ENCODE measurements at regions of chr6 and their contacts with region 1.

Region 1: GRCh38 chr6:46407776-46408530 is 83.3 kb downstream of the RCAN2 start:
- DNase-seq: no peak
- H3K4me3 ChIP-seq: no peak overlapping the region
- H3K27ac ChIP-seq: peak overlapping the region; percentile 19 to 45
- H3K4me1 ChIP-seq: peaks cover 0 to 74% (median 33%) of the 10 kb centered on the region in 4 donors
- H3K27me3 ChIP-seq: no peaks in the 10 kb centered on the region
- CTCF ChIP-seq: no peak

Region 2: GRCh38 chr6:46234156-46234556 is 173.8 kb before region 1 on chr6:
- intact Hi-C with region 1: loop called (anchors 10 kb)
- DNase-seq: peak; percentile 45 to 68
- H3K4me3 ChIP-seq: no peak overlapping the region
- H3K27ac ChIP-seq: peak overlapping the region; percentile 12 to 20
- H3K4me1 ChIP-seq: peaks cover 0 to 49% (median 3%) of the 10 kb centered on the region in 4 donors
- H3K27me3 ChIP-seq: no peaks in the 10 kb centered on the region
- CTCF ChIP-seq: no peak

Region 3: DNA sequence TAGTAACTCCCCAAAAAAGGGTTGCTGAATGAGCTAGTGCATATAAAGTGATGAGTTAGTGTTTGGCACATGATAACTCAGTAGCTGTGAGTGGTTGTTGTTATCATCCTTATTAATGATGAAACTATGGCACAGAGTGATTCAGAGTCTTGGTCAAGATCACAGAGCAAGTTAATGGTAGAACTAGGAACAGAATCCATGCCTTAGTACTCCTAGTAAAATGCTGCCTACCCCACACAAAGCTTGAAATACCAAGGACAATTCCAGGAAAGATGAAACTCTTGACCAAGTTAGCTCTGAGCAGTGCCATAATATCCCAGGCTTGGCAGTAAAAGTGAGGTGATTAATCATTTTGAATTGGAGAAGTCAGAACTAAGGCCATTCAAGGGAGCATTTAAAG is 128.1 kb before region 1 on chr6:
- intact Hi-C with region 1: no loop called
- DNase-seq: no peak
- H3K4me3 ChIP-seq: no peak overlapping the region
- H3K27ac ChIP-seq: no peak overlapping the region
- H3K4me1 ChIP-seq: peaks cover 0 to 54% (median 2%) of the 10 kb centered on the region in 4 donors
- H3K27me3 ChIP-seq: no peaks in the 10 kb centered on the region
- CTCF ChIP-seq: no peak

Region 4: DNA sequence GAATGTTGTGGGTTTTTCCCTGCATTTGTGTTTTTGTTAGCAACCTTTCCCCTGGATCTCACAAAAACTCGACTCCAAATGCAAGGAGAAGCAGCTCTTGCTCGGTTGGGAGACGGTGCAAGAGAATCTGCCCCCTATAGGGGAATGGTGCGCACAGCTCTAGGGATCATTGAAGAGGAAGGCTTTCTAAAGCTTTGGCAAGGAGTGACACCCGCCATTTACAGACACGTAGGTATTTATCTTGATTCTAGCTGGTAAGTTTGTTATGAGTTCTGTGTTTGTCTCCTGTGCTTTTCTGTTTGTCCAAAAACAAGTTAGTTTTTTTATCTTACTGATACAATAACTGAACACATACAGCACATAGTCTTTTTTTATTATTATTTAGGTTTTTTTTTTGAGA is 247.8 kb after region 1 on chr6:
- intact Hi-C with region 1: no loop called
- DNase-seq: no peak
- H3K4me3 ChIP-seq: no peak overlapping the region
- H3K27ac ChIP-seq: no peak overlapping the region
- H3K4me1 ChIP-seq: peaks cover 0 to 17% (median 11%) of the 10 kb centered on the region in 4 donors
- H3K27me3 ChIP-seq: no peaks in the 10 kb centered on the region
- CTCF ChIP-seq: no peak

Measured in tibial artery (tissue), 4 donors.